ENCODE measurements at regions of chr11 and their contacts with region 1.

Region 1: DNA sequence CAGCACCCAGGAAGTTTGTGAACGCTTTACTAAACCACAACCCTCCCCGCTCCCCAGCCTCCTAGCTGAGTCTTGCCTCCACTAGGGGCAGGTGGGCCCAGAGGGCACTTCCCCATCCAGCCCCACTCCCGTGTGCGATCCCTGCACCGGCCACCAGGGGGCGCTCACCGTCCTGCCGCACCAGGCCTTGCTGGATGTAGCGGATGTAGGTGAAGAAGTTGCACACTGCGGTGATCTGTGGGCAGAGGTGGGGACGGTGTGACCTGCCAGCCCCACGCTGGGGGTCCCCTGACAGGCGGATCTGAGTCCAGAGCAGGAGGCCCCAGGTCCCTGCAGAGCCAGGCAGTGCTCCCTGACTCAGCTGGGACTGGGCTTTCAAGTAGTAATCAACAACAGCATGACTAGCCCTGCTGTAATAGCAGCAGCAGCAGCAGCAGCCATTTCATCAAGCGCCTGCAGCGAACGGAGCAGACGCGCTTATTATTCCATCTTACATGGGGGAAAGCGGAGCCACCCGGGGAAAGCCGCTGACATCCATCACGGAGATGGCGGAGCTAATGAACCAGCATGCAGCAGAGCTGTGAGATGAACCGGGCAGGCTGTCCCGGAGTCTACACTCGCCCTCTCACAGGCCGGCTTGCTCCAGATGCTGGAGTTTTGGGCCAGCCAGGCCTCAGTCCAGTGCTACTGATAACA is 7.9 kb upstream of the FADS3 start:
- DNase-seq: peak; percentile 66 to 87
- ATAC-seq: peak; percentile 84

Region 2: DNA sequence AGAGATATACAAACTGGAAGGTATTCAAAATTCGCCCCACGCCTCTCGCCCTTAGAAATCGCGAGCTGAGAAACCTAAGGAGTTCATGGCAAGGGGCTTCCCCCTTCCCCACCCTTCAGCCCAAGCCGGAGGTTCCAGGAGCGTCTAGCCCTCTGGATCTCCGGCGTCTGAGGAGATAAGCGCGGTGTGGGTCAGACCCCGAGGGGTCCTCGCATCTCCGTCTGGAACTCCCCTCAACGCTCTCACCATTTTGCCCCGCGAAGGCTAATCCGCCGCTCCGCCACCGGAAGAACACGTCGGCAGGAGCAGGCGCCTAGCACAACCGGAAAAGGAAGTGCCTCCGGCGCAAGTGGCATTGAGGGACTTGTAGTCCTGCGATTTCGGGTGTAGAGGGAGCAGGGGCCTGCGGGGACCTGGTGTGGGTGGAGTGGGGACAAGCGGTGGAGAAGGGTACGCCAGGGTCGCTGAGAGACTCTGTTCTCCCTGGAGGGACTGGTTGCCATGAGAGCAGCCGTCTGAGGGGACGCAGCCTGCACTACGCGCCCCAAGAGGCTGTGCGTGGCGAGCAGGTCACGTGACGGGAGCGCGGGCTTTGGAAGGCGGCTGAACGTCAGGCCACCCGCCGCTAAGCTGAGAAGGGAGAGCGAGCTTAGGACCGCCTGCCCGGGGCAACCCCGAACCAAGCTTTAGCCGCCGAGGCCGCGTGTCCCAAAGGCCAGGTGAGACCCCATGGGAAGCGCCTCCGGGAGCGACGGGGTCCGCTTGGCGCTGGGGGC is 106.8 kb before region 1 on chr11 and contains the starts of genes FEN1 and TMEM258:
- intact Hi-C with region 1: loop called in 1 of 2 experiments (anchors 5 kb)
- DNase-seq: peak; percentile 91 to 93
- ATAC-seq: peak; percentile 90
- total RNA-seq, gene FEN1: 7.7 to 13.3 TPM
- total RNA-seq, gene TMEM258: 87.3 to 91.8 TPM

Region 3: DNA sequence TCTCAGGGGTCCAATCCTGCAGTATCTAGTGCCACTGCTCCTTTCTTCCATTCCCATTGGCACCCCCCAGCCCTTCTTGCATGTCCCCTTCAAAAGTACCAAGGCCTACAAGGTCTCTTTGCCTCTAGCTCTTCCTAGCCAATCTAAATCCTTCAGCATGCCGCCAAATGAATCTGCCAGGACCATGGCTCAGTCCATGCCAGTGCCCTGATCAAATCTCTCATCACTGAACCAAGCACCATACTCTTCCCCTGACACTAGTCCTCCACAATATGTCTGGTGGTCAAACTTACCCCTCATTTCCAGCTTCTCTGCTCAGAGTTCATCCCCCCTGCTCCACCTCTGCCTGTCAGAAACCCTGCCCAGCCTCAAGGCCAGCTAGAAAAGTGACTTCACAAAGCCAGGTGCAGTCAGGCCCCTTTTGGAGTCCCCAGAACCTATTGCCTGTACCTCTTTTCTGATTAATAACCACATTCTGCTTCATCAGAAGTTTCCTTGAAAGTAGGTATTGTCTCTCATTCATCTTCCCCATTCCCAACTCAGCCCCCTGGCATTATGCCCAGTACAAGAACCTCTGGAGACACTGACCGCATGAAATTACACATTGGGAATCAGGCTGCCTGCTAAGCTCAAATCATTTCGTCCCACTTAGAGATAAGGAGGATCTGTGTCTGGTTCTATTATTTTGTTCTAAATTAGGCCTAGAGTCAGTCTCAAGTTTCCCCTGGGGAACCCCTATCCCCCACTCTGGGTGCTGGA is 95.2 kb before region 1 on chr11:
- intact Hi-C with region 1: loop called (anchors 5 to 10 kb)
- DNase-seq: no peak
- ATAC-seq: no peak

Region 4: GRCh38 chr11:61947486-61948210 is 48.4 kb after region 1 on chr11:
- intact Hi-C with region 1: loop called (anchors 2 to 5 kb)
- DNase-seq: peak; percentile 78 to 86
- ATAC-seq: peak; percentile 93

Region 5: GRCh38 chr11:62081378-62082291 is 182.3 kb after region 1 on chr11:
- intact Hi-C with region 1: loop called (anchors 2 to 10 kb)
- DNase-seq: peak; percentile 53 to 79
- ATAC-seq: peak; percentile 87